ENCODE measurements at regions of chr1 and their contacts with region 1.

Region 1: GRCh38 chr1:238063454-238063853 is 172.7 kb upstream of the ZP4 start:
- DNase-seq: peak; percentile 60
- ATAC-seq: peak; percentile 67
- H3K4me3 ChIP-seq: no peak overlapping the region
- H3K27ac ChIP-seq: no peak overlapping the region; the same call in 1 of the 2 replicates
- H3K4me1 ChIP-seq: peaks cover 13% of the 10 kb centered on the region
- H3K27me3 ChIP-seq: no peaks in the 10 kb centered on the region
- CTCF ChIP-seq: no peak
- EP300 ChIP-seq: peak in 1 of 2 experiments; percentile 14; a peak in 1 of 4 replicates
- POLR2A ChIP-seq: no peak
- RAD21 ChIP-seq: no peak

Region 2: DNA sequence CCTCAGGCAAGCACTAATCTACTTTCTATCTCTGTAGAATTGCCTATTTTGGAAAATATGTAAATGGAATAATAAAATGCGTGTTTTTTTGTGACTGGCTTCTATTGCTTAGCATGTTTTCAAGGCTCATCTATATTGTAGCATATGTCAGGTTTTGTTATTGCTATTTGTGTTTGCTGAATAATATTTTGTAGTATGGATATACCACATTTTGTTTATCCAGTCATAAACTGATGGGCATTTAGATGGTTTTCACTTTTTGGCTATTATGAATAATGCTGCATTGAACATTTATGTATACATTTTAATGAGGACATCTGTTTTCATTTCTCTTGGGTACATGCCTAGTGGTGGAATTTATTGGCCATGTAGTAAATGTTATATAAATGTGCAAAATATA is 10.5 kb after region 1 on chr1:
- CTCF ChIA-PET with region 1: interaction called, 6 read pairs
- POLR2A ChIA-PET with region 1: no interaction called
- RAD21 ChIA-PET with region 1: no interaction called
- SMC1A ChIA-PET with region 1: interaction called, 19 read pairs
- in situ Hi-C with region 1: no loop called
- intact Hi-C with region 1: no loop called
- DNase-seq: no peak
- ATAC-seq: no peak
- H3K4me3 ChIP-seq: no peak overlapping the region
- H3K27ac ChIP-seq: no peak overlapping the region
- H3K4me1 ChIP-seq: no peaks in the 10 kb centered on the region
- H3K27me3 ChIP-seq: no peaks in the 10 kb centered on the region
- CTCF ChIP-seq: no peak
- EP300 ChIP-seq: no peak
- POLR2A ChIP-seq: no peak
- RAD21 ChIP-seq: no peak

Region 3: DNA sequence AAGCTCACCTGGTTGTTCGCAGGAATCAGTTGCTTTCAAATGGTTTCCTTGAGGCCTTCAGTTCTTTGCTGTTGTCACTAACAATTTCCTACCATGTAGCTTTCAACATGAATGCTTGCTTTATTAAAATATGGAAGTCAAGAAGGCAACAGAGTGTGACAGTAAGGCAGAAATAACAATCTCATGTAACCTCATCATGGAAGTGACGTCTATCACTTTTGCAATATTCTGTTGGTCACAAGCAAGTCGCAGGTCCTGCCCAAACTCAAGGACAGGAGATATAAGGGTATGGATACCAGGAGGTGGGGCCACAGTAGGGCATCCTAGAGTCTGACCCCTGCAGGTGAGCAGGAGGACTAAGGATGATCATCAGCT is 124.1 kb after region 1 on chr1:
- CTCF ChIA-PET with region 1: interaction called, 5 read pairs
- POLR2A ChIA-PET with region 1: interaction called, 3 read pairs
- RAD21 ChIA-PET with region 1: interaction called, 4 read pairs
- SMC1A ChIA-PET with region 1: interaction called, 17 read pairs
- in situ Hi-C with region 1: no loop called
- intact Hi-C with region 1: loop called (anchors 1 kb)
- DNase-seq: peak; percentile 20
- ATAC-seq: peak; percentile 84
- H3K4me3 ChIP-seq: no peak overlapping the region
- H3K27ac ChIP-seq: no peak overlapping the region
- H3K4me1 ChIP-seq: no peaks in the 10 kb centered on the region
- H3K27me3 ChIP-seq: no peaks in the 10 kb centered on the region
- CTCF ChIP-seq: no peak
- EP300 ChIP-seq: 0 out of 4 replicates have a peak, but pooled peaks of 1 of the 2 experiments have one; percentile 5
- POLR2A ChIP-seq: no peak
- RAD21 ChIP-seq: no peak